Gastrocnemius medialis (tissue), 4 donors: ENCODE measurements at regions of chr12 and their contacts with region 1.

Region 1: DNA sequence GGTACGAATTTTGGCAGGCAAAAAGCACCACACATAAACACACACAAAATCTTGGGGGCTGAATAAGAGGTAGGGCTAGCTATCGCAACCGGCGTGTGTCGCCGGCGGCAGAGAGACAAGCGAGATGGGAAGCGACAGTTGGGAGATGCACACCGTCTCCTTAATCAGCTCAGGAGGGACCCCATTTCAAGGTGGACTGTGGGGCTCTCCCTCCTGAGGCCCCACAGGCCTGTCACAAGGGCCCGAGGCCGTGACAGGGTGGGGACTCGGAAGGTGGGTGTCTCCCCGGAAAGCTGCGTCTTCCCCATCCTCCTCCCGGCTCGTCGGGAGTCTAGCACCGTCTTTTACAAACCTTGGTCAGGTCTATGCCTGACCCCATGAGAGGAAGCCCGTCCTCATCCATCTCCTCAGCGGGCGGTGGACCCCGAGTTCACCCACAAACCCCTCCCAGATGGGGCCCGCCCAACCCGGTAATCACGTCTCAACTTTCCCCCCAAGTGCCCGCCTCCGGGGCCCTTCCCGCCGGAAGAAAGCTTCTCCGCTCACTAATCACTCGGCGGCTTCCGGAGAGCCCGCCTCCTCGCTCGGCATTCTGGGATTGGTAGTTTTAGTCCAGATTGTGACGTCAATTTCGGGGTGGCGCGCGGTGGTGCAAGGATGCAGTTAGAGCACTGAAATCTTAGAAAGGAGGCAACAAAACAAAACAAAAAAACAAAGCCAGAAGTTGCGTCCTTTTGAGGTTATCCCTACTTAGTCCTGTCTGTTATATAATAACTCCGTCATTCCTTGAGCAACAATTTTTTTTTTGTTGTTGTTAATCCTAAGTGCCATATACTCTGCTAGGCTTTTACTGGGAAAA is at the start of gene WASHC3:
- DNase-seq: peak; percentile 92 to 93
- ATAC-seq: peak; percentile 97 to 98
- H3K4me3 ChIP-seq: peak within 1 kb of the TSS; percentile 88 to 95 (median 91)
- H3K27ac ChIP-seq: peak within 1 kb of the TSS; percentile 88 to 93 (median 90)
- H3K4me1 ChIP-seq: peaks cover 0 to 8% of the 10 kb centered on the region in 2 donors
- H3K27me3 ChIP-seq: no peaks in the 10 kb centered on the region
- CTCF ChIP-seq: no peak
- POLR2A ChIP-seq: peak; percentile 74 to 78
- total RNA-seq, gene WASHC3: 44.2 to 81.8 (median 62.2) TPM

Region 2: DNA sequence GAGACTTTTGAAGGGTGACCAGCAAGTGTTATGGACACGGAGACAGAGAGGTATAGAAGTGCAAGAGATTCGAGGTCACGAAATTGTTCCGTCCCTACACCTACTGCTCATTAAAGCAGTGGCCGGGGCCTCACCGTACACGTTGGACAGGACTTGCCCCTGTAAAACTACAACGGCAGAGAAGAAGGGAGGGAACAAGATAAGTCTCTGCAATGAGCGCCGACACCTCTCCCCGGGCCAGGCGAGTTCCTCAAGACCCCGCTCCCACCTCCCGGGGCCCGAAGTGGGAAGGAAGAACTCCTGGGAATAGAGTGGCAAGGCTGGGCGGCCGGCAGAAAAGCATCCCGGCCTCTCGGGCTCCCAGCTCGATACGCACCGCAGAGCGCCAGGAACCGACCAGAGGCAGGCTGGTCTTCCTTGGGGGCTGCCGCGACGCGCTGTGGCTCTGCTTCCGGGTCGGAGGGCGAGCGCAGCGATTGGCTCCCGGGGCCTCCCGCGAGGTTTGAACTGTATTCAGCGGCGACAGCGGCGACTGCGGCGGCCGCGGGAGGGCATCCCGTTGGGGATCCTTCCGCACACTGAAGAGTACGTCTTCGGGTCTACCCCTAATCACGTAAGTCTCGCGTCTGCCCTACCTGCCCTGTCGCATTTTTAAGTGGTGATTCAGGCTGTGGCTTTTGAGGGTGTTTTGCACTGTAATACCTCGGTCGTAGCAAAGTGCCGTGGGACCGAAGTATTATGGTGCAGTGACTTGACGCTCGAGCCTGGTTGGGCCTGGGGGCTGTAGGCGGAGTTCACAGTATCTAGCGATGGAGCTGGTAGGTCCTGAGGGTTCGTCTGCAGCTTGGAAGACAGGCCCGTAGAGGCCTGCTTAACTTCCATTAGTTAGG is 58.1 kb after region 1 on chr12 and contains the starts of genes NUP37 and PARPBP:
- in situ Hi-C with region 1: no loop called
- intact Hi-C with region 1: loop called (anchors 1 kb)
- DNase-seq: peak; percentile 78 to 81
- ATAC-seq: peak; percentile 96 to 97
- H3K4me3 ChIP-seq: peak within 1 kb of the TSS; percentile 74 to 98 (median 90)
- H3K27ac ChIP-seq: peak within 1 kb of the TSS; percentile 85 to 91 (median 88)
- H3K4me1 ChIP-seq: peaks cover 7 to 16% of the 10 kb centered on the region in 2 donors
- H3K27me3 ChIP-seq: no peaks in the 10 kb centered on the region
- CTCF ChIP-seq: peak in 1 of 5 experiments; percentile 35
- POLR2A ChIP-seq: peak; percentile 45 to 55
- total RNA-seq, gene NUP37: 11.6 to 26.6 (median 19.2) TPM
- total RNA-seq, gene PARPBP: 0.31 to 3.1 (median 0.89) TPM